OCI-LY7 (cell line): ENCODE measurements at regions of chr7 and their contacts with region 1.

Region 1: DNA sequence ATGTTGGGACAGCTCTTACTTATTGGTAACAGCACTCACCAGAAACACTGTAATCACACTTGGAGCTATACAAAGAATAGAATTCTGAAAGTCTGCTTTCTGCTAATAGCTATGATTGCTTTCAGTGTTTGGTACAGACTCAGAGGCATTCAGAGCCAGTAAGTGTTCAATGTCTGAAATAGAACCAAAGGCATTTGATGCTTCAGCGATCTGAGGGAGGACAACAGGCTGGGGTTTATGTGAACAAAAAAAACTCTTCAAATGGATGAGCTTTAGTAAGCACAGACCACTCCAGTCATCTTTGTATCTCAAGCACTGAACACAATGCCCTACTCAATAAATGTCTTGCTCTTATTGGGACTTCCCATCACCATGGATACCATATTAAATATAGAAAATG is 322.8 kb upstream of the GRM3 start:
- DNase-seq: peak; percentile 88
- H3K4me3 ChIP-seq: peak overlapping the region; percentile 55
- H3K27ac ChIP-seq: peak overlapping the region; percentile 99
- H3K4me1 ChIP-seq: peaks cover 60% of the 10 kb centered on the region
- CTCF ChIP-seq: no peak

Region 2: GRCh38 chr7:84663224-84663623 is 1657.7 kb before region 1 on chr7:
- CTCF ChIA-PET with region 1: no interaction called
- POLR2A ChIA-PET with region 1: no interaction called
- intact Hi-C with region 1: no loop called
- DNase-seq: no peak
- H3K4me3 ChIP-seq: no peak overlapping the region
- H3K27ac ChIP-seq: no peak overlapping the region
- H3K4me1 ChIP-seq: no peaks in the 10 kb centered on the region
- CTCF ChIP-seq: no peak

Region 3: DNA sequence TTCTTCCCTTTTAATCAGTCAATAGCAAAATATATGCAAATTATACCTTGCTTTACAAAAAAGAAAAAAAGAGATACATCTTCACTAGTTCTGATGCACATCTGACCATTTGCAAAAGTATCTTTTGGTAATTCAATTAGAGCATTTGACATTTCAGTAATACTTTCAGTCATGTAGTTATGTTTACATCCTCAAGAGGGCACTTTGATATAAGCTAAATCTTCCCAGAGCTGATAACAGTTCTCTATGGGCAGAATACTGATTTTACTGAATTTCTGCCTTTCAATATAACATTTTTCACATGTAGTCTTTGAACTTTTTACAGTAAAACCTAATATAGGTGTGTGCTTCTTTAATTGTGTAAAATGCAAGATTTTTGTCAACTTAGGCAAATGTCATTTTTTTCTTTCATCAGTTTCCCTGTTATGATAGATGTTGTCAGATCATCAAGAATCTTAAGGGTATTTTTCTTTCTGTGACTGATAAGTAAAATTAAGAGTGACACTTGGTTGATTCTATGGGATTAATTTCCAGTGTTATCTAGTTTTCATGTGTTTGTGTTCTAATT is 430.6 kb before region 1 on chr7:
- CTCF ChIA-PET with region 1: no interaction called
- POLR2A ChIA-PET with region 1: interaction called, 3 read pairs
- intact Hi-C with region 1: loop called (anchors 5 kb)
- DNase-seq: peak; percentile 66
- H3K4me3 ChIP-seq: no peak overlapping the region
- H3K27ac ChIP-seq: no peak overlapping the region
- H3K4me1 ChIP-seq: no peaks in the 10 kb centered on the region
- CTCF ChIP-seq: peak; percentile 89

Region 4: DNA sequence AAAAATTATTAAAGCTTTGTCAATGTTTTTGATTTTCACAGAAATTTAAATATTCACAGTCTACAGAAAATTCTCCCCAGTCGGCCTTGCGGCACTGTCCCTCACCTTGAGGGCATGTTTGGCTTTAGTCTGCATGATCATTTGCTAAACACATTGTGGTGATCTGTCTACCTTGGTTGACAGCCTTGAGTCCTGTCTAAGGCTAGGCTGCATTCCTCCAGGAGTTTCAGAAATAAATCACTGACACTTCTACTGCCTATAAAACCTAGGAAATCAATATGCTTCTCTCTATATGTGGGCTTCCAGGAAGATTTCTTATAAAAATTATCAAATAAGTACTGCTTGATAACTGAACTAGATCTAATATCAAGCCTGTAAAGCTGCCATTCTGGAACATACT is 107.9 kb before region 1 on chr7:
- CTCF ChIA-PET with region 1: no interaction called
- POLR2A ChIA-PET with region 1: interaction called, 11 read pairs
- intact Hi-C with region 1: no loop called
- DNase-seq: no peak
- H3K4me3 ChIP-seq: no peak overlapping the region
- H3K27ac ChIP-seq: no peak overlapping the region
- H3K4me1 ChIP-seq: peaks cover 23% of the 10 kb centered on the region
- CTCF ChIP-seq: no peak

Region 5: GRCh38 chr7:86301301-86301700 is 19.6 kb before region 1 on chr7:
- CTCF ChIA-PET with region 1: no interaction called
- POLR2A ChIA-PET with region 1: interaction called, 12 read pairs
- intact Hi-C with region 1: no loop called
- DNase-seq: no peak
- H3K4me3 ChIP-seq: no peak overlapping the region
- H3K27ac ChIP-seq: no peak overlapping the region
- H3K4me1 ChIP-seq: peaks cover 9% of the 10 kb centered on the region
- CTCF ChIP-seq: no peak

Region 6: GRCh38 chr7:86339051-86339450 is 18.2 kb after region 1 on chr7:
- CTCF ChIA-PET with region 1: no interaction called
- POLR2A ChIA-PET with region 1: interaction called, 15 read pairs
- intact Hi-C with region 1: no loop called
- DNase-seq: no peak
- H3K4me3 ChIP-seq: no peak overlapping the region
- H3K27ac ChIP-seq: no peak overlapping the region
- H3K4me1 ChIP-seq: no peaks in the 10 kb centered on the region
- CTCF ChIP-seq: no peak

Region 7: DNA sequence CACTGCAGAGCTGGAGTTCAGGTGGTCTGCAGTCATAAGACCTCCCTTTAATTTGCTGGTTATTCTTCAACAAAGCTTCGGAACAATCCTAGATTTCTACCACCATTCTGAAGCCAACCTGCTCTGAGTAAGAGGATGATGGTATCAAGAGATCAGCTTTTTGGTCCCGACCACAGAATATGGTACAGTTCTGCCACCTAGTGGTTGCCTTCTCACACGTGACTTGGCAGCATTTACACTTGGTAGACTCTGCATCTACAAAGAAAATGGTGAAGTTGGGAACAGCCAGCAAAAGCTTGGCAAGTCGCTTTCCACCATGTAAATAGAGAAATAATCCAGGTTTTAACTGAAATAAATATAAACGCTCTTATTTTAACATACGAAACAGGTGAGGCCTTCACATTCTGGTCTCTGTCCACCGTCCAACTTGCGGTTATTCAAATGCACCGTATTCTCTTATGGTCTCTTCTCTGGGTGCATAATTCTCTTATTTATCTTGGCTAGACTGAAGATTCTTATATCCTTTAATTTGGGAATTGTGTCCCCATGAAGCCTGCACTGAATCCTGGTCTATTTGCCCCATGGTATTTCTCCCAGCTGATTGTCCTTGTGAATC is 148.9 kb after region 1 on chr7:
- CTCF ChIA-PET with region 1: no interaction called
- POLR2A ChIA-PET with region 1: interaction called, 4 read pairs
- intact Hi-C with region 1: loop called (anchors 2 kb)
- DNase-seq: peak; percentile 91
- H3K4me3 ChIP-seq: no peak overlapping the region
- H3K27ac ChIP-seq: no peak overlapping the region
- H3K4me1 ChIP-seq: peaks cover 7% of the 10 kb centered on the region
- CTCF ChIP-seq: peak; percentile 96

Region 8: GRCh38 chr7:87159538-87159937 is 838.6 kb after region 1 on chr7:
- CTCF ChIA-PET with region 1: no interaction called
- POLR2A ChIA-PET with region 1: no interaction called
- intact Hi-C with region 1: loop called (anchors 5 kb)
- DNase-seq: peak; percentile 16
- H3K4me3 ChIP-seq: peak overlapping the region; percentile 5
- H3K27ac ChIP-seq: peak overlapping the region; percentile 14
- H3K4me1 ChIP-seq: peaks cover 56% of the 10 kb centered on the region
- CTCF ChIP-seq: no peak